HepG2 (cell line): ENCODE measurements at regions of chr7 and their contacts with region 1.

Region 1: DNA sequence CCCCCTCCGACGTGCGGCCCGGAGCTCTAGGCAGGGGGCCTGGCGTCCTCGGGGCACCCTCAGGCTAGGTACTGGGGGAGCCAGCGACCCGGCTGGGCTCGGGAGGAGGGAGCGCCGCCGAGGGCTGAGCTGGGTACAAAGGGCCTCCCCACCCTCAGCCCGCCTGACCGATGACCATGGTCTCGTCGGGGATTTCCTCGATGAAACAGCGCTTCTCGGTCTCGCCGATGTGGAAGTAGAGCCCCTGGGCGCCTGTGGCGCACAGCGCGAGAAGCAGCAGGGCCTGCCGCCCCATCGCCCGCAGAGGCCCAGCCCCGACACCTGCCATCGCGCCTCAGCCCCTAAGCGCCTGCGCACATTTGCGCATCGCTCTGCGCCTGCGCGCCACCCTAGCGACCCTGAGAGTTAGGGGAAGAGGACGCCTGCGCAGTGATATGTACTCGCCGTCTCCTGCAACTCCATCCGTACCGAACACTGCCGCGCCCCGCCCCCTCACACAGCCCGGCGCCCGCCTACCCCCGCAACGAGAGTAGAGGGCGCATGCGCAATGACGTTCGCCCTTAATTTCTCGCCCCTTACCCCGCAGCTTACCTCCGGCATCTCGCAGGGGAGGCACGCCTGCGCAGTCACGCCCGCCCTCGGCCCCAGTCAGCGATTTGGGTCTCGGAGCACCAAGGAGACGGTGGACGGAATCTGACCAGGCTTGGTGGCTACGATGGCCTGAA is at the start of gene TMED4:
- DNase-seq: peak; percentile 96
- ATAC-seq: peak; percentile 90
- H3K4me3 ChIP-seq: peak within 1 kb of the TSS; percentile 60 to 87 (median 75)
- H3K27ac ChIP-seq: peak within 1 kb of the TSS; percentile 76
- H3K4me1 ChIP-seq: peaks cover 32% of the 10 kb centered on the region
- H3K27me3 ChIP-seq: peaks cover 0 to 11% of the 10 kb centered on the region in 2 experiments; a peak in 1 of 5 replicates
- CTCF ChIP-seq: no peak
- EP300 ChIP-seq: no peak
- POLR2A ChIP-seq: peak in 1 of 2 experiments; percentile 85; a peak in 2 of 4 replicates
- RAD21 ChIP-seq: peak; percentile 59; the same call in 1 of the 2 replicates
- total RNA-seq, gene TMED4: 39.2 and 81.4 TPM in 2 replicates

Region 2: GRCh38 chr7:44615149-44615611 is 33.1 kb after region 1 on chr7:
- CTCF ChIA-PET with region 1: no interaction called
- POLR2A ChIA-PET with region 1: no interaction called
- in situ Hi-C with region 1: no loop called
- intact Hi-C with region 1: no loop called
- DNase-seq: peak; percentile 13
- ATAC-seq: peak; percentile 83
- H3K4me3 ChIP-seq: peak overlapping the region in 1 of 3 experiments; percentile 27; a peak in 1 of 6 replicates
- H3K27ac ChIP-seq: peak overlapping the region; percentile 44
- H3K4me1 ChIP-seq: peaks cover 23% of the 10 kb centered on the region
- H3K27me3 ChIP-seq: no peaks in the 10 kb centered on the region
- CTCF ChIP-seq: no peak
- EP300 ChIP-seq: no peak
- POLR2A ChIP-seq: no peak
- RAD21 ChIP-seq: no peak

Region 3: GRCh38 chr7:44769776-44770662 is 188.0 kb after region 1 on chr7:
- CTCF ChIA-PET with region 1: no interaction called
- POLR2A ChIA-PET with region 1: interaction called, 3 read pairs
- in situ Hi-C with region 1: loop called (anchors 25 kb)
- intact Hi-C with region 1: no loop called
- DNase-seq: no peak
- ATAC-seq: peak; percentile 14
- H3K4me3 ChIP-seq: no peak overlapping the region
- H3K27ac ChIP-seq: no peak overlapping the region
- H3K4me1 ChIP-seq: peaks cover 35% of the 10 kb centered on the region
- H3K27me3 ChIP-seq: no peaks in the 10 kb centered on the region
- CTCF ChIP-seq: no peak
- EP300 ChIP-seq: no peak
- POLR2A ChIP-seq: no peak
- RAD21 ChIP-seq: no peak

Region 4: GRCh38 chr7:44885394-44886317 is 303.6 kb after region 1 on chr7 and contains the start of gene PURB:
- CTCF ChIA-PET with region 1: no interaction called
- POLR2A ChIA-PET with region 1: interaction called, 12 read pairs
- in situ Hi-C with region 1: no loop called
- intact Hi-C with region 1: no loop called
- DNase-seq: peak; percentile 86
- ATAC-seq: peak; percentile 92
- H3K4me3 ChIP-seq: peak within 1 kb of the TSS; percentile 73 to 96 (median 88)
- H3K27ac ChIP-seq: peak within 1 kb of the TSS; percentile 92
- H3K4me1 ChIP-seq: peaks cover 48% of the 10 kb centered on the region
- H3K27me3 ChIP-seq: no peaks in the 10 kb centered on the region
- CTCF ChIP-seq: no peak
- EP300 ChIP-seq: peak; percentile 42 to 58; a peak in 2 of 4 replicates
- POLR2A ChIP-seq: peak; percentile 84 to 86
- RAD21 ChIP-seq: peak; percentile 60
- total RNA-seq, gene PURB: 4.3 and 10.1 TPM in 2 replicates